A549 (cell line): ENCODE measurements at regions of chr1 and their contacts with region 1.

Region 1: GRCh38 chr1:160997323-160998038 is 23.5 kb downstream of the F11R start:
- DNase-seq: peak; percentile 80 to 86
- ATAC-seq: peak; percentile 88 to 92
- H3K4me3 ChIP-seq: no peak overlapping the region
- H3K27ac ChIP-seq: peak overlapping the region; percentile 28 to 77; a peak in 4 of 6 replicates
- H3K4me1 ChIP-seq: peaks cover 28% of the 10 kb centered on the region
- CTCF ChIP-seq: peak; percentile 59
- EP300 ChIP-seq: no peak
- POLR2A ChIP-seq: no peak
- RAD21 ChIP-seq: peak; percentile 67 to 69

Region 2: DNA sequence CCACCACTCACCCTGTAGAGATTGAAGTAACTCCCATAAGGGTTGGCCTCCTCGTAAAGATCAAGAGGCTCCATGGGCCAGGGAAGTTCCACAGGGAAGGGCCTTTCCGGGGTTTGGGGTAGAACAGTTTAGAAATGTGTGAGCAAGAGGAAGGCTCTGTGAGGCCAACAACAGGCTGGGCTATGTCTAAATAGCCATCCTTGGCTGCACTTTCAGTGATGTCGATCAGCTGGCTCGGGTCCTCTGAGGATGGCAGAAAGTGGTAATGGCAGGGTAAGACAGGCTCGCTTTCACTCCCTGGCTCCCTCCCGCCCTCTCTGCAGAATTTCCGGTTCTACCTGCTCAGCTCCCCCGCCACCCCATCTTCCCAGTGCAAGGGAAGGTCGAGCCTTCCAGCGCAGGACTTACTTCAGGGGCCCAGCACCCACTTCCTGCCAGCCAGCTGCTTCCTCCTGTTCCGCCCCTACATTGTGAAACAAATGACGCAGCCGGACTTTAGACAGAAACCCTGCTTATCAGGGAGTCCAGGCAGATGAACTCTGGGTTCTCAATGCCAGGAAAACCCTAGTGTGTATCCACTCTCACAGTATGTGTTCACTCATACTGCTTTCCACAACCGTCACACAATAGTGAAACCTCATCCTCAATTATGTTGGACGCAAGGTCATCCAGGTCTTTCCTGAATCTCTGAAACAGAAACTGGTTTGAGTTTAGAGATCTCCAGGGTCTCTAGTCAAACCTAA is 16.2 kb after region 1 on chr1:
- CTCF ChIA-PET with region 1: interaction called, 16 read pairs
- POLR2A ChIA-PET with region 1: interaction called, 5 read pairs
- DNase-seq: peak; percentile 91 to 92
- ATAC-seq: peak; percentile 94 to 98
- H3K4me3 ChIP-seq: peak overlapping the region; percentile 31
- H3K27ac ChIP-seq: peak overlapping the region; percentile 83 to 92
- H3K4me1 ChIP-seq: peaks cover 66% of the 10 kb centered on the region
- CTCF ChIP-seq: no peak
- EP300 ChIP-seq: peak in 1 of 2 experiments; percentile 68; a peak in 2 of 5 replicates
- POLR2A ChIP-seq: peak; percentile 48; the same call in 1 of the 2 replicates
- RAD21 ChIP-seq: no peak

Region 3: DNA sequence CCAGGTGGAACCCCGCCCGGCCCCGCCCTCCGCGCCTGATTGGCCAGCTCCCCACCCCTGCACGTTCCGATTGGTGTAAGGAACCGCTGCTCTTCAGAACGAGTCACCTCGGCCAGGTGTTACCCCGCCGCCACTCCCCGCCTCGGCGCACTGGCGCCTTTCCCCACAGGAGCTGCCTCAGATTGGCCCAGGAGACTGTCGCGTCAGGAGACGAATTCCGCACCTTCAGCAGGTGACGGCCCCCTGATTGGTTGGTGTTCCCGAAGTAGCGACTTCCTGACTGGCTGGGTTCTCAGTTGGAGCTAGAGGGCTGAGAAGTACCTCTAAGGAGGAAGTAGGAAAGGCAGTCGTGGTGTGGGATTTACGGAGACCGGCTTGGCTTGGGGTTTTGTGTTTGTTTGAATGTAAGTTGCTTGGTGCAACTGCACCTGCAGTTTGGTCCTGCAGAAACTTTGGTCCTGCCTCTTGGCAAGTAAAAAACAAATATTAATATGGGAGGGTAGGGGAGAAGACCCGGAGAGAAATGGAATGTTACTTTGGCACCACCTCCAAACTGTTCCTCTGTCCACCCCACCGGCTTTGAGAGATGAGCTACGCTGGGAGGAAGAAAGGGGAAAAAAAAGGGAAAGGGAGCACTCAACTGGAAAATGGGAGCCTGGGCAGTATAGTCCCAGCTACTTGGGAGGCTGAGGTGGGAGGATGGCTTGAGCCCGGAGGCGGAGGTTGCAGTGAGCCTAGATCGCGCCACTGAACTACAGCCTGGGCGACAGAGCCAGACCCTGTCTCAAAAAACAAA is 23.9 kb after region 1 on chr1:
- CTCF ChIA-PET with region 1: interaction called, 29 read pairs
- POLR2A ChIA-PET with region 1: interaction called, 16 read pairs
- DNase-seq: peak; percentile 92 to 99
- ATAC-seq: peak; percentile 93 to 94
- H3K4me3 ChIP-seq: peak overlapping the region; percentile 67
- H3K27ac ChIP-seq: peak overlapping the region; percentile 82 to 84
- H3K4me1 ChIP-seq: peaks cover 53% of the 10 kb centered on the region
- CTCF ChIP-seq: no peak
- EP300 ChIP-seq: no peak
- POLR2A ChIP-seq: peak; percentile 50
- RAD21 ChIP-seq: no peak

Region 4: DNA sequence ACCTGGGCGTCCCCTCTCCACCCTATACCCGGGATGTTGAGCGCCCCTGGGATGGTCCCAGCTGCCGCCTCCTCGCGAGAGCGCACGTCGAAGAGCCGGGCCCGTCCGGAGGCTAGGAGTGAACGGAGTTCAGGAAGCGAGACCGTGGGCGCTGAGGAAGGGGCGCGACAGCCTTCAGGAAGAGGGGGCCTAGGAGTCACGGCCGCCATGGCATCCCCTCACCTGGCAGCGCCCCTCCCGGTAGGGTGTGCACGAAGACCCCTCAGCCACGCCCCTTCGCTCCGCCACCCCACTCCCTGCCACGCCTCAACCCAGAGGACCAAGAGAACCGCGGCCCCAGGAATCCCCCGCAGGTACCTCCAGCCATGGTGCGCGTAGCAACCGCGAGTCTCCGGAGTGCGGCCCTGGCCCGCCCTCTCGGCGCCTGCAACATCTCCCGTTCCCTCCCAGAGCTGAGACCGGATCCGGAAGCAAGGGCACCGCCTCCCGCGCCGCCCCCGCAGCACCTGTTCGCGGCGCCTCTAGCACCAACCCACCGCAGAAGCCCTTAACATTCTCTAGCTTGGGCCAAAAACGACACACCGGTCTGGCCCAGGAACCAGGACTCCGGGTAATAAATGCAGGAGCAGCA is 41.2 kb after region 1 on chr1 and contains the start of gene TSTD1:
- CTCF ChIA-PET with region 1: interaction called, 3 read pairs
- POLR2A ChIA-PET with region 1: interaction called, 10 read pairs
- DNase-seq: no peak
- ATAC-seq: no peak
- H3K4me3 ChIP-seq: no peak within 1 kb of the TSS
- H3K27ac ChIP-seq: no peak within 1 kb of the TSS
- H3K4me1 ChIP-seq: no peaks in the 10 kb centered on the region
- CTCF ChIP-seq: no peak
- EP300 ChIP-seq: no peak
- POLR2A ChIP-seq: no peak
- RAD21 ChIP-seq: no peak
- polyA plus RNA-seq, gene TSTD1: not detected in 2 replicates

Region 5: DNA sequence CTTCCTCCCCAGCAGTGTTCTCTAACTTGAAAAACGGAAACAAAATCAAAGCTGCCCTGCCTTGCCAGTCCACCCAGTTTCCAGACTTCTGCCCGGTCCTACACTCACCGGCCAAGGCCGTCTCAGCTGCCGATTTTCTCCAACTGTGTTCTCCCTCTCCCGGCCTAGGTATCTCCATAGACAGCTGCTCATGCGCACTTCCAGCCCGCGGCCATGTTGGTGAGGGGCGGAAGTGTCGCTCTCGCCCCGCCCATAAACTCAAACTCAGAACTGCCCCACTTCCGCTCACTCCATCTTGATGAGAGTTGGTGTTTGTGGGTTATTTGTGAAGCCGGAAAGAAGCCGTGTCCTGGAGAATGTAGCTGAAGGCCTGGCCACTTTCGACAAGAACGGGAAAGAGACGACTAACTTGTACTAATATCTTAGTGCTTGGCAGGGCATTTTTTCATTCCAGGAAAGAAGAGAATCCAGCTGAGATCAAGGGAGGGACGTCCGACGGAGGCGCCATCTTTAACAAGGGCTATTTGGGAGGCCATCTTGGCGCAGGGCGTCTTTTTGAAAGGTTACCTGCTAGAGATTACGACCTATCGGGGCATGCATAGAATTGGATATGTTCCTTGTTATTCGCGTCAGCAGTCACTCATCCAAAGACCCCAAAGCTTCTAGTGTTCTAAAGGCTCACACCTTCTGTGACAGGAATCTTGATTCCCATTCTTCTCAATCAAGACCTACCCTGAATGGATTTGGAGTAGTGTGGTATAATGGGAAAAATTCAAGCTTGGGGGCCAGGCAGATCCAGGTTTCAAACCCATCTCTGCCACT is 48.5 kb after region 1 on chr1 and contains the start of gene USF1:
- CTCF ChIA-PET with region 1: interaction called, 12 read pairs
- POLR2A ChIA-PET with region 1: interaction called, 11 read pairs
- DNase-seq: peak; percentile 96 to 97
- ATAC-seq: peak; percentile 90 to 95
- H3K4me3 ChIP-seq: peak within 1 kb of the TSS; percentile 75
- H3K27ac ChIP-seq: peak within 1 kb of the TSS; percentile 87 to 93
- H3K4me1 ChIP-seq: peaks cover 6% of the 10 kb centered on the region
- CTCF ChIP-seq: no peak
- EP300 ChIP-seq: no peak
- POLR2A ChIP-seq: peak; percentile 77
- RAD21 ChIP-seq: no peak
- polyA plus RNA-seq, gene USF1: 35.5 and 43.5 TPM in 2 replicates

Region 6: DNA sequence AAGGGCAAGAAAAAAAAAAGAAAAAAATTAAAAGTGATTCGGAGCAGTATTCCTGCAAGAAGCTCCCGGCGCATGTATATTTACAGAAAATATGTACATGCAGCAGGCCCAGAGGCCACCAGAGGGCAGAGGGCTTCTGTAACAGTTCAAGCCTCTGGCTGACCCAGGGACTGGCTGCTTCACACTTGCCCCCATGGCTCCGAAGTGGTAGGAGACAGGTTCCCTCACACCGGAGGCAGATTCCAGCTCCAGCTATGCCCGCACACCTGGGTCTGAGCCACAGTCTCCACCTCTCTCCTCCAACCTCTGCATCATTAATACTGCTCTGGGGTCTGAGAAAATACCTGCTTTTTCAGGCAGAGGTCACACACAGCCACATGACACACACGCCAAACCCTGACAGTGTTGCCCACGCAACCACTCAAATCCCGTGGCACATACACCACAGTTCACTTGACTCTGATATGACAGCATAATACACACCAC is 74.4 kb after region 1 on chr1:
- CTCF ChIA-PET with region 1: interaction called, 10 read pairs
- POLR2A ChIA-PET with region 1: no interaction called
- DNase-seq: peak; percentile 70 to 72
- ATAC-seq: peak; percentile 77 to 83
- H3K4me3 ChIP-seq: no peak overlapping the region
- H3K27ac ChIP-seq: peak overlapping the region in 1 of 2 experiments; percentile 51; a peak in 2 of 6 replicates
- H3K4me1 ChIP-seq: peaks cover 27% of the 10 kb centered on the region
- CTCF ChIP-seq: peak; percentile 75
- EP300 ChIP-seq: no peak
- POLR2A ChIP-seq: no peak
- RAD21 ChIP-seq: peak; percentile 73 to 81